ENCODE measurements at regions of chr7 and their contacts with region 1.

Region 1: GRCh38 chr7:50467817-50468610 is 17.9 kb upstream of the FIGNL1 start:
- DNase-seq: peak; percentile 80
- ATAC-seq: peak; percentile 86

Region 2: GRCh38 chr7:50056131-50056530 is 411.9 kb before region 1 on chr7:
- intact Hi-C with region 1: no loop called
- DNase-seq: no peak
- ATAC-seq: no peak

Region 3: DNA sequence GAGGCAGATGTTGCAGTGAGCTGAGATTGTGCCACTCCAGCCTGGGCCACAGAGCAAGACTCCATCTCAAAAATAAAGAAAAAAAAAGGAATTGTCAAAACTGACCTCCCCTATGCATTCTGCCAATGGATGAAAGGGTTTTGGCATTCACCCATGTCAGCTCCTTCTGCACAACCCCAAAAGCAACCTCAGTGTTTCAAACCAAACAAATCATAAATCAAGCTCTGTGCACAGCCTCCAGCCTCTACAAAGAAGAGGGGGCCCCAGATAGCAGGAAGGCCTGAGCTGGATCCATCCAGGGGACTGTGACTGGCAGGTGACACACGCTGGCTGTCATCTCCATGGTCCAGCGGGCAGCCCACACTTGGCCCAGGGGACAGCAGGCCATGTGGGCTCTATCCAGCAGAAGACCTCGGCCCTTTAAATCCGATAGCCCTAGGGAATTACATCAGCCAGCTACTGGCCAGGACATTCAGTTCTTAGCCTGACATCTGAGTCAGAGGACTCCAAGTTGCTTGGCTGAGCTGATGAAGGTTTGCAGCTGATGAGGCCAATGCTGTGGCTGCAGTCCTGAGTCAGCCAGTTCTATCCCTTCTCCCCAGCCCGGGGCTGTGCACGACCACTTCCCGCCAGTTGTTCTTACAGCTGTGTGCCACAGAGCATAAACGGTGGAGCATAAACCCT is 34.1 kb after region 1 on chr7:
- intact Hi-C with region 1: loop called (anchors 1 kb)
- DNase-seq: peak; percentile 86
- ATAC-seq: peak; percentile 93

Region 4: GRCh38 chr7:50603287-50603686 is 135.3 kb after region 1 on chr7:
- intact Hi-C with region 1: loop called (anchors 5 kb)
- DNase-seq: no peak
- ATAC-seq: no peak

Region 5: DNA sequence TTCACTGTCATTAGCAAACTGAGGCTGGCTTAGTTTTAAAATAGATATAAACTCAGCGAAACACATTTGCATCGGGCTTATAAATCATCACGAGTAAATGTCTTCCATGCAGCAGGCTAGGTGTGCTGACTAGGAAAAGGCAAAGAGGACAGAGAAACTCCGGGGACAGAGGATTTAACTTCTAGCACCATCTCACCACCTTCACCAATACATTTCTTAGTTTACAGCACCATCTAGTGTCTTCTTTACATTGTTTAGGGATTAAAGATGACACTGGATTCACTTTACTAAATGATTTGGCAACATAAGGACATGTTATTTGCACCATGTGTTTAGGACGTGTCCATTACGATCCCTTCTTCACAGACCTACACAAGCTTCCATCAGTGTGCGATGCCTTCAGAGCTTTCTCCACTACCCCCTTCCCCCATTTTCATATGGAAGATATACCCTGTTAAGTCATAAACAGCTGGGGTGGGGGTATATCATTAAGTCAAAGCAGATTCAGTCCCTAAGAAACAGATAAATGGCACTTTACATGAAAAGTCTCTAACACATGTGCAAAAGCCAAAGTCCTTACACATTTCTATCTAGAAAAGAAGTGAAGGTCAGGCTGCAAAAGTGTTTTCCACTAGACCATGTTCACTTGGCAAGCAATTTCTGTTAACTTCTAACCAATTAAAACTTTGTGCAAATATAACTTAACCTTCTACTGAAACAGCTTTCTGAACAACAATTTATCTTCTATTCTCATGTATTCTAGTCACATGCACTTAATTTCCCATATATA is 211.4 kb after region 1 on chr7:
- intact Hi-C with region 1: loop called (anchors 1 kb)
- DNase-seq: no peak
- ATAC-seq: peak; percentile 75

Region 6: GRCh38 chr7:51067757-51068156 is 599.7 kb after region 1 on chr7:
- intact Hi-C with region 1: loop called (anchors 5 kb)
- DNase-seq: no peak
- ATAC-seq: peak; percentile 23

Region 7: GRCh38 chr7:51141451-51142003 is 673.5 kb after region 1 on chr7:
- intact Hi-C with region 1: loop called (anchors 5 kb)
- DNase-seq: no peak
- ATAC-seq: peak; percentile 72